ENCODE measurements at regions of chr7 and their contacts with region 1.

Region 1: GRCh38 chr7:76069238-76069638 is 21.3 kb downstream of the MDH2 start:
- DNase-seq: peak; percentile 59
- H3K4me3 ChIP-seq: no peak overlapping the region
- H3K27ac ChIP-seq: peak overlapping the region; percentile 12 to 84 (median 76)
- H3K4me1 ChIP-seq: peaks cover 7 to 19% (median 9%) of the 10 kb centered on the region in 4 donors
- H3K27me3 ChIP-seq: no peaks in the 10 kb centered on the region
- CTCF ChIP-seq: peak; percentile 24 to 60 (median 34)
- EP300 ChIP-seq: no peak
- POLR2A ChIP-seq: no peak

Region 2: DNA sequence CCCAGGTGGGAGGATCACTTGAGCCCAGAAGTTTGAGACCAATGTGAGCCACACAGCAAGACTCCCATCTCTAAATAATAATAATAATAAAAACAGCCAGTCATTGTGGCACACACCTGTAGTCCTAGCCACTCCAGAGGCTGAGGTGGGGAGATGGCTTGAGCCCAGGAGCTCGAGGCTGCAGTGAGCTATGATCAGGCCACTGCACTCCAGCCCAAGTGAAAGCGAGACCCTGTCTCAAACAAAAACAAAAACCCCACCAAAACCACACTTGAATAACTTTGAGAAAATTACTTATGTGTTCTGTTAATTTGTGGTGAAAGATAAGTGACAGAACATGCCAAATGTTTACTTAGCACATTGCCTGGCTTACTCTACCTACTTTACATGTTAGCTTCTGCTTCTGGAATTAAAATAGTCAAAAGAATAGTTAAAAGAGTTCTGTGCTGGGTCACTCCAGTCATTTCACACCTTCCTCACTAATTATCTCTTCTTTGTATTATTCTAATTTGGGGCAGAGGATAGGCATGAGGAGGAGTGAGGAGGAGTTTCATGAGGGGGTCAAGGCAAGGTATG is 1719.2 kb after region 1 on chr7:
- in situ Hi-C with region 1: no loop called
- intact Hi-C with region 1: loop called (anchors 5 kb)
- DNase-seq: no peak
- H3K4me3 ChIP-seq: no peak overlapping the region
- H3K27ac ChIP-seq: no peak overlapping the region
- H3K4me1 ChIP-seq: peaks cover 0 to 30% (median 20%) of the 10 kb centered on the region in 4 donors
- H3K27me3 ChIP-seq: no peaks in the 10 kb centered on the region
- CTCF ChIP-seq: no peak
- EP300 ChIP-seq: no peak
- POLR2A ChIP-seq: no peak